Heart left ventricle (tissue), 16 donors: ENCODE measurements at regions of chr6 and their contacts with region 1.

Region 1: GRCh38 chr6:165987483-165988301 is 180.0 kb downstream of the TBXT start:
- DNase-seq: peak; percentile 83 to 96 (median 88)
- ATAC-seq: peak; percentile 92 to 96 (median 94)
- H3K4me3 ChIP-seq: peak overlapping the region; percentile 32 to 70 (median 59)
- H3K27ac ChIP-seq: peak overlapping the region in 5 of 12 donors; percentile 62 to 80 (median 68)
- H3K4me1 ChIP-seq: peaks cover 0 to 31% (median 10%) of the 10 kb centered on the region in 12 donors
- H3K27me3 ChIP-seq: peaks cover 0 to 41% (median 9%) of the 10 kb centered on the region in 9 donors
- CTCF ChIP-seq: no peak
- POLR2A ChIP-seq: no peak

Region 2: GRCh38 chr6:165884813-165885765 is 102.6 kb before region 1 on chr6:
- intact Hi-C with region 1: loop called in 2 of 10 experiments (anchors 5 to 10 kb)
- DNase-seq: peak; percentile 74 to 86 (median 77)
- ATAC-seq: peak; percentile 74 to 96 (median 89)
- H3K4me3 ChIP-seq: no peak overlapping the region
- H3K27ac ChIP-seq: no peak overlapping the region
- H3K4me1 ChIP-seq: no peaks in the 10 kb centered on the region
- H3K27me3 ChIP-seq: peaks cover 0 to 2% (median 0%) of the 10 kb centered on the region in 9 donors
- CTCF ChIP-seq: peak; percentile 73 to 95 (median 88)
- POLR2A ChIP-seq: no peak